Lower leg skin (tissue), 4 donors: ENCODE measurements at regions of chr10 and their contacts with region 1.

Region 1: GRCh38 chr10:83666762-83667161 is 472.5 kb upstream of the GHITM start:
- DNase-seq: no peak
- H3K4me3 ChIP-seq: no peak overlapping the region
- CTCF ChIP-seq: no peak
- POLR2A ChIP-seq: no peak

Region 2: GRCh38 chr10:83625831-83626360 is 40.9 kb before region 1 on chr10:
- intact Hi-C with region 1: no loop called
- DNase-seq: no peak
- H3K4me3 ChIP-seq: no peak overlapping the region
- CTCF ChIP-seq: no peak
- POLR2A ChIP-seq: no peak

Region 3: GRCh38 chr10:83680470-83680891 is 13.7 kb after region 1 on chr10:
- intact Hi-C with region 1: loop called (anchors 1 kb)
- DNase-seq: no peak
- H3K4me3 ChIP-seq: no peak overlapping the region
- CTCF ChIP-seq: no peak
- POLR2A ChIP-seq: no peak